ENCODE measurements at regions of chr1 and their contacts with region 1.

Region 1: DNA sequence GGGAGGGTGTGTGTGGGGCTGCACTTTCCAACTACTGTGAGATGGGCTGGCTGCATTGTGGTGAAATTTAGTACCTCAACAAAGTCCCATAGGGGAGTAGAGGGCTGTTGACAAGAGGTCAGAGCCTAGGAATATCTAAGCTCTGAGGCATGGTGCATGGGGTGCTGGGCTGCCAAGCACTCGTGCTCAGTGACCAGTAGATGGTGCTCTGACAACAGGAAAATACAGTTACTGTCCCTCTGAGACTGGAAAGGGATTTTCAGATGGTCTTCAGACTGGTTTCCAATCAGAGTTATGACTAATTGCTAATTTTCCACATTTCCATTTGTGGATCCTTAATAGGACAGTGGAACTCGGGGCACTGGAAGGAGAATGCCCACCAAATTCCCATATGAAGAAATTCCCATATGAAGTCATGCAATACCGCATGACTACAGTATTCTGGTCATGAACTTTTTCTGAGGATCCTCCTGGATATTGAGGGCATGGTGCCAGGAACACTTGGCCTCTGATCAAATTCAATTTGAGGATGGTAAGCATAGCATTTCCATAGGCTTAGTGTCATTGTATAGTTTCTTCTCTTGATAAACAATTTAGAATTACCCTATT is 4.1 kb upstream of the CACNA1E start:
- DNase-seq: no peak
- H3K4me3 ChIP-seq: no peak overlapping the region
- H3K27ac ChIP-seq: no peak overlapping the region
- H3K4me1 ChIP-seq: no peaks in the 10 kb centered on the region
- H3K27me3 ChIP-seq: peaks cover 29% of the 10 kb centered on the region
- CTCF ChIP-seq: peak; percentile 73 to 96 (median 95)

Region 2: DNA sequence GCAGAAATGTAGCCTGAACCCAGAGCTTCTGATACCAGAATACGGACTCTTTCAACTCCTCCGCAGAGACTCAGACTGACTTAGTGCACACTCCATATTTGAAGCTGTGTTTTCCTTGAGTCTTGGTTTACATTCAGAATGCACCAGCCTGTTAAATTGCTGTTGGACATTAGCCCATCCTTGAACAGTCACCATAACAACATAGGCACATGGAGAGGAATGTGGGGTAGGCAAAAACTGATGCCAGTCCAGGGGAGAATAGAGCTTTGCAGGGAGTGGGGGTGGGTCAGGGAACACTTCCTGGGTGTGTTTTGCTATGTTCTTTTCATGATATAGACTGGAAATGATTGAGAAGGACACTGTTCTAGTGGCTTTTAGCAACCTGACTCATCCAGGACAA is 72.3 kb before region 1 on chr1:
- dilution Hi-C with region 1: no loop called
- DNase-seq: no peak
- H3K4me3 ChIP-seq: no peak overlapping the region
- H3K27ac ChIP-seq: no peak overlapping the region
- H3K4me1 ChIP-seq: peaks cover 2% of the 10 kb centered on the region
- H3K27me3 ChIP-seq: no peaks in the 10 kb centered on the region
- CTCF ChIP-seq: no peak

Region 3: GRCh38 chr1:181674623-181675022 is 195.4 kb after region 1 on chr1:
- dilution Hi-C with region 1: loop called (anchors 25 kb)
- DNase-seq: no peak
- H3K4me3 ChIP-seq: no peak overlapping the region
- H3K27ac ChIP-seq: no peak overlapping the region
- H3K4me1 ChIP-seq: no peaks in the 10 kb centered on the region
- H3K27me3 ChIP-seq: peaks cover 5% of the 10 kb centered on the region
- CTCF ChIP-seq: no peak